ENCODE measurements at regions of chr2 and their contacts with region 1.

Region 1: DNA sequence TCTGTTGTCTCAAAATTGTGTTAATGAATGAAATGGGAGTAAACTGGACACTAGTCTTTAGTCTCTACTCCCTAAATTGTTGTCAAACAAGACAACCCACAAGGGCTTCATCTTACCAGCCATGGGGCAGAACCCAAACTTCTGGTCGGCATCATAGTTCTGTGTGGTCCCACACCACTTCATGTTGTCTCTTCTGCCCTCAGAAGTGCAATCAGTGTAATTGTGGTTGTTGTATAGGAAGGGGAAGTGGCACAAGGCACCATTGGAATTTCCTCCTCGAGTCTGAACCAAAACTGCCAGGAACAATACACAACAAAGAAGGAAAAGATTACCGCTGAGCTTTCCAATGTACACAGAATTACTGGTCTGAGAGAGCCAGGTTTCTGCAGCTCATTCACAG is 12.6 kb downstream of the FN1 start:
- DNase-seq: no peak
- H3K4me3 ChIP-seq: no peak overlapping the region
- H3K27ac ChIP-seq: peak overlapping the region; percentile 58 to 77 (median 69)
- H3K4me1 ChIP-seq: peaks cover 0 to 97% (median 88%) of the 10 kb centered on the region in 4 donors
- H3K27me3 ChIP-seq: no peaks in the 10 kb centered on the region
- CTCF ChIP-seq: no peak
- EP300 ChIP-seq: no peak
- POLR2A ChIP-seq: no peak

Region 2: GRCh38 chr2:215241791-215242305 is 181.4 kb before region 1 on chr2:
- intact Hi-C with region 1: no loop called
- DNase-seq: no peak
- H3K4me3 ChIP-seq: no peak overlapping the region
- H3K27ac ChIP-seq: no peak overlapping the region
- H3K4me1 ChIP-seq: no peaks in the 10 kb centered on the region
- H3K27me3 ChIP-seq: no peaks in the 10 kb centered on the region
- CTCF ChIP-seq: no peak
- EP300 ChIP-seq: no peak
- POLR2A ChIP-seq: no peak

Region 3: GRCh38 chr2:215288112-215288815 is 135.0 kb before region 1 on chr2:
- intact Hi-C with region 1: no loop called
- DNase-seq: no peak
- H3K4me3 ChIP-seq: no peak overlapping the region
- H3K27ac ChIP-seq: no peak overlapping the region
- H3K4me1 ChIP-seq: no peaks in the 10 kb centered on the region
- H3K27me3 ChIP-seq: no peaks in the 10 kb centered on the region
- CTCF ChIP-seq: no peak
- EP300 ChIP-seq: no peak
- POLR2A ChIP-seq: no peak

Region 4: GRCh38 chr2:215299337-215299859 is 123.8 kb before region 1 on chr2:
- intact Hi-C with region 1: no loop called
- DNase-seq: no peak
- H3K4me3 ChIP-seq: no peak overlapping the region
- H3K27ac ChIP-seq: no peak overlapping the region
- H3K4me1 ChIP-seq: peaks cover 0 to 9% (median 2%) of the 10 kb centered on the region in 4 donors
- H3K27me3 ChIP-seq: no peaks in the 10 kb centered on the region
- CTCF ChIP-seq: no peak
- EP300 ChIP-seq: no peak
- POLR2A ChIP-seq: no peak

Region 5: GRCh38 chr2:215377283-215377682 is 46.0 kb before region 1 on chr2:
- intact Hi-C with region 1: loop called (anchors 5 kb)
- DNase-seq: no peak
- H3K4me3 ChIP-seq: no peak overlapping the region
- H3K27ac ChIP-seq: peak overlapping the region in 2 of 4 donors; percentile 12 to 53
- H3K4me1 ChIP-seq: peaks cover 0 to 5% (median 0%) of the 10 kb centered on the region in 4 donors
- H3K27me3 ChIP-seq: no peaks in the 10 kb centered on the region
- CTCF ChIP-seq: no peak
- EP300 ChIP-seq: no peak
- POLR2A ChIP-seq: no peak

Region 6: DNA sequence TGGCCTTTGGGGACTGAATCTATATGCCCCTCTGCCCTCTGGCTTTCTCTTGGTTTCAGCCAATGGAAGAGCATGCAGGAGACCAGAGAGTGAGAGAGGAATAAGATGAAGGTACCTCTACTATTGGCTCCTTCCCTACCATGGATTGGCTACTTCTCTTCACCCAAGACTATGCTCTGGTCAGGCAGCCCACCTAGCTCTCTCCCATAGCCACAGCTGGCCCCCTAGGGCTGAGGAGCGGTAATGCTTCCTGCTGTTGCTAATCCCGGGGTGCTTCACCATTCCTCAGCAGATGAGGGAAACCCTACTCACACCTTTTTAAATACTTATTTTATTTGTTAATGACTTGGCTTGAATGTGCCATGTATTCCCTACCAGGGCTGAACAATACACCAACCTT is 447.8 kb after region 1 on chr2:
- intact Hi-C with region 1: no loop called
- DNase-seq: no peak
- H3K4me3 ChIP-seq: no peak overlapping the region
- H3K27ac ChIP-seq: no peak overlapping the region
- H3K4me1 ChIP-seq: peaks cover 0 to 10% (median 7%) of the 10 kb centered on the region in 4 donors
- H3K27me3 ChIP-seq: no peaks in the 10 kb centered on the region
- CTCF ChIP-seq: peak in 1 of 3 experiments; percentile 19
- EP300 ChIP-seq: no peak
- POLR2A ChIP-seq: no peak

Measured in esophagus muscularis mucosa (tissue), 4 donors.